ENCODE measurements at regions of chr14 and their contacts with region 1.

Region 1: GRCh38 chr14:74018586-74019407 is at the starts of genes BBOF1 and ENTPD5:
- H3K4me3 Mint-ChIP-seq: peak within 1 kb of the TSS; percentile 93
- H3K27ac Mint-ChIP-seq: peak within 1 kb of the TSS; percentile 94
- H3K4me1 Mint-ChIP-seq: peaks cover 15% of the 10 kb centered on the region
- H3K27me3 Mint-ChIP-seq: no peaks in the 10 kb centered on the region

Region 2: DNA sequence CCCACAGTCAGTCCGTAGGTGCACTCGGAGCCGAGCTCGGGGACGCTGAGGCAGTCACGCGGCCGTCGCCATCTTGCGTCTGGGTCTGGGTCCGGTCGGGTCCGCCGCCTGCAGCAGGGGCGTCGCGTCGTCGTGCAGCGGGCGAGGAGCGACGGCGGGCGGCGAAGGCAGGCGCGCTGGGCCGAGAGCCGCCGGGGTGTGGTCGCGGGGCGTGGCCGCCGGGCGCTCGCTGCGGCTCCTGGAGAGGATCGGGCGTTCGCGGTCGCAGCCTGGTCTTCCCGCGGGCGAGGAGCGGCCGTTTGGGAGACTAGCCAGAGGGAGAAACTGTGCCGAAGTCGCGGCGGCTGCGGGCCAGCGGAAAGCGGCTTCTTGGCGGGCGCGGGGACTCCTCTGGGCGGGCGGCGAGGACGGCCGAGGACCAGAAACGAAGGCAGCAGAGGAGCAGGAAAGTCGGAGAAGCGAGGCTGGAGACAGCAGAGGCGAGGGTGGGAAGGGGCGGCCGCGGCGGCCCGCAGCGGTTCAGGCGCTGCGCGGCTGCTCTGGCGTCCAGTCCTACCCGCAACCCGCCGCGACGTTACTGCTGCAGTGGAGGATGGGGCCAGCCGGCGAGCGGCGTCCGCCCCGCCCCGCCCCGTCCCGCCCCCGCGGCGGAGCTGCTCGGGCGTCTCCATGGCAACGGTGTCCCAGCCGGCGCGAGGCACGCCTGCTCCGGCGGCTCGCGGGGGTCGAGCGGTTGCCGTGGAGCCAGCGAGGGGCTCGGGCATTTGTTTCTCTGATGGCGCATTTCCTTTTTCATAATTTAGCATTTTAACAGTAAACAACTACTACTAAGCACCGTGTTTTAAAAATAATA is 304.8 kb before region 1 on chr14 and contains the start of gene PNMA1:
- intact Hi-C with region 1: loop called (anchors 10 kb)
- H3K4me3 Mint-ChIP-seq: peak within 1 kb of the TSS; percentile 97
- H3K27ac Mint-ChIP-seq: peak within 1 kb of the TSS; percentile 91
- H3K4me1 Mint-ChIP-seq: peaks cover 32% of the 10 kb centered on the region
- H3K27me3 Mint-ChIP-seq: peaks cover 20% of the 10 kb centered on the region

Region 3: DNA sequence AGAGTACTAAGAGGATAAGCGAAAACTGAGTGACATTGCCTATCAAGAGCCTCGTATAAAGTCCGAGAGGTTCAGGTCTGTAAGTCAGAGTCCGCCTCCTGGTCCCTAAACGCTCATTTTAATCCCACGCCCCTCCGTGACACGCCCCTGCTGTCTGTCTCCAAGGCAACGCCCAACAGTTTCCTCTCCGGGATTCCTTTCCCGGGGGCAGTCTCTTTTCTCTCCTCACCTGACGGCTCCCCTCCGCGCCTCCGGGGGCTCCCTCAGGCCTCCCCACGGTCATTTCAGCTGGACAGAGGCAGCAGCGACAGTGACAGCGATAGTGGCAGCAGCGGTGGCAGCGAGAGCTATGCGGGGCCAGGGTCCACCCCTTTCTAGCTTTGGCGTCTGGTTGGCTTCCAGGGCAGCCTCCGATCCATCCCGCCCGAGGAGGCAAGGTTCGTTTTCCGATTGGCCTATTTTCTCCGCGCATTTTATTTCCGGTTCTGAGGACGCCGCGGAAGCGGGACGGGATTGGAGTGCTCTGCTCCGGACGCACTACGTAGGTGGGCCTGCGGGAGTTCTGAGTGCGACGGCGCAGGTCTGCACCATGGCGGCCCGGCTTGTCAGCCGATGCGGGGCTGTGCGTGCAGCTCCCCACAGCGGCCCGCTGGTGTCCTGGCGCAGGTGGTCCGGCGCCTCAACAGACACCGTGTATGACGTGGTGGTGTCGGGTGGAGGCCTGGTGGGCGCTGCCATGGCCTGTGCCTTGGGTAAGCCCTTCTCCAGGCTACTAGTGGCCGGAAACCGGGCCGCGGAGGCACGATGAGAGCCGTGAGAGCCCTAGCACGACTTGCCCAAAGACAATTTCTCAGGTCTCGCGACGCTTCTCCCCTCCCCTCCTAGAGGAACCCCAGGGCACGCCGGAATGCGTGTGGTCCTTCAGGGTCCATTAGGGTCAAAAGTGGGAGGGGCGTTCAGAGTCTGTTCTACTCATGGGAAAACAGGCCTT is 68.8 kb before region 1 on chr14 and contains the starts of genes COQ6 and FAM161B:
- intact Hi-C with region 1: loop called (anchors 2 kb)
- H3K4me3 Mint-ChIP-seq: peak within 1 kb of the TSS; percentile 94
- H3K27ac Mint-ChIP-seq: peak within 1 kb of the TSS; percentile 88
- H3K4me1 Mint-ChIP-seq: peaks cover 10% of the 10 kb centered on the region
- H3K27me3 Mint-ChIP-seq: no peaks in the 10 kb centered on the region

Region 4: GRCh38 chr14:73968885-73969284 is 49.9 kb before region 1 on chr14:
- intact Hi-C with region 1: no loop called
- H3K4me3 Mint-ChIP-seq: no peak overlapping the region
- H3K27ac Mint-ChIP-seq: no peak overlapping the region
- H3K4me1 Mint-ChIP-seq: no peaks in the 10 kb centered on the region
- H3K27me3 Mint-ChIP-seq: no peaks in the 10 kb centered on the region

Region 5: DNA sequence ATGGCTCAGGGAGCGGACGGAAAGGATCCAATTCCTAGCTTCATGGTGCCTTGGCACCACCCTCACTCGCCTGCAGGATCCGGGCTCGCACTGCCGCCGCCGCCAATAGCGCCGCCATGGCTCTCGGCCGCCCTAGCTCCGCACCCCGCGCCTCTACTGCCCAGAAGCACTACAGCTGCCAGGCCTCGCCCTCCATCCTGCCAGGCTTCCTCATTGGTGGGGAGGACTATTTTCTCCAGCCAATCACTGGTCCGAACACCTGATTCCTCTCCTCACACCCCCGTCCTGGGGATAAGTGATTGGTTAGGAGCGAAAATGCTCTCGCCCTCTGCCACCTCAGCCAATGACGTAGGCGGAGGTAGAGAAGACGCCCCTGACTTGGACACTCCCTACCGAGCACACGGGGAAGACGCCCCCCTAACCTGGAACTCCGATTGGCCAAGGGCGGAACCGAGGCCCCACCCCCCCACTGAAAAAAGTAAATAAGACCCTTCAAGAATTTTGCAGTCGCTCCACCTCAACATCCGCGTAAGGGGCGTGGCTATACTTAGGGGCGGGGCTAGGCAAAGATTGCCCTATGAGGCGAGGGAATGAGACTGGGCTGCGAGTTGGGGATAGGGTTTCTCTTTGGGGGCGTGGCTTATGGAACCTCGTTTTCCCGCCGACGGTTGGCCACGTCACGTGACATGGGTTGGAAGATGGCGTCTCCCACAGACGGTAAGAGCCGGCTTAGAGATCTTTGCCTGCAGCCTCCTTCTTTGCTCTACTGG is 65.7 kb after region 1 on chr14 and contains the starts of genes ALDH6A1 and LIN52:
- intact Hi-C with region 1: loop called (anchors 2 kb)
- H3K4me3 Mint-ChIP-seq: peak within 1 kb of the TSS; percentile 87
- H3K27ac Mint-ChIP-seq: peak within 1 kb of the TSS; percentile 89
- H3K4me1 Mint-ChIP-seq: peaks cover 34% of the 10 kb centered on the region
- H3K27me3 Mint-ChIP-seq: no peaks in the 10 kb centered on the region

Region 6: DNA sequence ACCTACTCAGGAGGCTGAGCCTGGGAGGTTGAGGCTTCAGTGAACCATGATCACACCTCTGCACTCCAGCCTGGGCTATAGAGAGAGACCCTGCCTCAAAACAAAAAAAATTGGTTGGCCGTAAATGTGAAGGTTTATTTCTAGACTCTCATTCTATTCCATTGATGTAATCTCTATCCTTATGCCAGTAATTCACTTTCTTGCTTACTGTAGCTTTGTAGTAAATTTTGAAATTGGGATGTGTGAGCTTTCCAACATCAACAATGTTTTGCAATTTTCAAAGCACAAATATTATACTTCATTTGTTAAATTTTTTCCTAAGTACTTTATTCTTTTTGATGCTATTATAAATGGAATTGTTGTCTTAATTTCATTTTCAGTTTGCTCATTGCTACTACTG is 90.6 kb after region 1 on chr14:
- intact Hi-C with region 1: no loop called
- H3K4me3 Mint-ChIP-seq: no peak overlapping the region
- H3K27ac Mint-ChIP-seq: no peak overlapping the region
- H3K4me1 Mint-ChIP-seq: no peaks in the 10 kb centered on the region
- H3K27me3 Mint-ChIP-seq: no peaks in the 10 kb centered on the region

Measured in dendritic cell treated with granulocyte-macrophage colony-stimulating factor and Interleukin-4, amounts not matched to agents 40 ng/mL and 50 ng/mL, for 4 days (primary cell).